ENCODE measurements at regions of chr11 and their contacts with region 1.

Region 1: DNA sequence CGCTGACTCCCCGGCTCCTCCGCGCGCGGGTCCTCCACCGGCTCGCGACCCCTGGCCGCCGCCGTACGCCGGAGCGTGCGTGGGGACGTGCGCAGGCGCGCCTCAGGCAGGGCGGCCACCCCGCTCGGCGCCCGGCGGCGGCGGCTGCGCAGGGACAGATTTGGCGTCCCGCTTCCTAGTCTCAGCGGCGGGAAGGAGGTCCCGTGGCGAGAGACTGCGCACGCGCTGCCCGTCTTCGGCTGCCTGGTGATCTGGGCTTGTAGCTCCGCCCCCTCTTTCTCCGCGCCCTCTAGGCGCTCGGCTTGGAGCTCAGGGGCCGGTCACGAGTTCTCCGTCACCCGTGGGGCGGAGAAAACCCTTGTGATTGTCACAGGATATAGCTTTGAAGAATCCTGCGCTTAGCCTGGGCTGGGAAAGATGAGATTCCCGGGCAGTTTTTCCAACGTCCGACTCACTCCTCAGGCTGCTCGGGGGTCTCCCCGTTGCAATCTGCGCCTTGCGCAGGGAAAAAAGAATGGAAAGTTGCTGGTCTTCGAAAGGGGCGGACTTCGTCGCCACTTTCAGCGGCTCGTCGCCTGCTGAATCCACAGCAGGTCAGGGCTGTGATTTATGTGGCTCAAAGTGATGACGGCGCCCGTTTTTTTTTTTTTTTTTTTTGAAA is at the start of gene PATL1:
- DNase-seq: peak; percentile 99 to 100 (median 99)
- H3K4me3 ChIP-seq: peak within 1 kb of the TSS; percentile 78 to 90 (median 87)
- H3K27ac ChIP-seq: peak within 1 kb of the TSS; percentile 82 to 93
- H3K4me1 ChIP-seq: peaks cover 14 to 28% (median 24%) of the 10 kb centered on the region in 4 experiments
- H3K27me3 ChIP-seq: no peaks in the 10 kb centered on the region

Region 2: GRCh38 chr11:59644528-59644927 is 24.6 kb before region 1 on chr11:
- CTCF ChIA-PET with region 1: no interaction called
- POLR2A ChIA-PET with region 1: no interaction called
- DNase-seq: no peak
- H3K4me3 ChIP-seq: no peak overlapping the region
- H3K27ac ChIP-seq: no peak overlapping the region
- H3K4me1 ChIP-seq: no peaks in the 10 kb centered on the region
- H3K27me3 ChIP-seq: no peaks in the 10 kb centered on the region

Region 3: GRCh38 chr11:59680287-59681154 is 11.4 kb after region 1 on chr11:
- CTCF ChIA-PET with region 1: interaction called, 10 read pairs
- POLR2A ChIA-PET with region 1: no interaction called
- DNase-seq: peak; percentile 77 to 88 (median 86)
- H3K4me3 ChIP-seq: no peak overlapping the region
- H3K27ac ChIP-seq: no peak overlapping the region
- H3K4me1 ChIP-seq: no peaks in the 10 kb centered on the region
- H3K27me3 ChIP-seq: no peaks in the 10 kb centered on the region

Measured in common myeloid progenitor, CD34-positive (primary cell).